ENCODE measurements at regions of chr16 and their contacts with region 1.

Region 1: GRCh38 chr16:50024684-50025536 is at the start of gene CNEP1R1:
- DNase-seq: peak; percentile 88 to 98 (median 94)

Region 2: DNA sequence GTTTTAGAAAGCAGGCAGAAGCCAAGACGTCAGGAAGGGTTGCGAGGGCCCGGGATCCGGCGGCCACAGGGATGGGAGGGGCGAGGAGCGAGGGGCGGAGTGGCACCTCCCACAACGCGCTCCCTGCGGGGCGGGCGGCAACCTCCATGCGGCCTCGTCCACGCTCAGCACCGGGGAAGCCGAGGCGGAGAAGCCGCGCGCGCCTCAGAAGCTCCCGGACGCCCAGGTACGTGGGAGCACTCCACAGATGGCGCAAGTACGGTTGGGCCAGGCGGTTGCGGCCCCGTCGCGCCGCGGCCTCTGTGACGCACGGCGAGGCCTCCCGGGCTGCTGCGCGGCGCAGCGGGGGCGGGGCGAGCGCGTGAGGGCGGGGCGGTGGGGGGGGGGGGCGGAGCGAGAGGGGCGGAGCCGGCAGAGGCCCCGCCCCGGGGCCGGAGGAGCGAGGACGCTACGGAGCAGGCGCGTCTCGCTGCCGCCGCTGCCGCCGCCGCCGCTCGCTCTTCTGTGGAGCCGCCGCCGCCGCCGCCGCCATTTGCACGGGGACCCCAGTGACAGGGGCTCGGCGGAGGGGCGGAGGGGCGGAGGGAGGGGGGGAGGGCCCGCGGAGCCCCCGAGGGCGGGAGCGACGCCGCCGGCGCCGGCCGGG is 128.0 kb after region 1 on chr16 and contains the start of gene TENT4B:
- intact Hi-C with region 1: loop called (anchors 2 kb)
- DNase-seq: peak; percentile 67 to 95 (median 90)

Region 3: GRCh38 chr16:50210266-50211038 is 185.5 kb after region 1 on chr16:
- intact Hi-C with region 1: loop called (anchors 5 kb)
- DNase-seq: peak; percentile 71 to 94 (median 86)